ENCODE measurements at regions of chr5 and their contacts with region 1.

Region 1: DNA sequence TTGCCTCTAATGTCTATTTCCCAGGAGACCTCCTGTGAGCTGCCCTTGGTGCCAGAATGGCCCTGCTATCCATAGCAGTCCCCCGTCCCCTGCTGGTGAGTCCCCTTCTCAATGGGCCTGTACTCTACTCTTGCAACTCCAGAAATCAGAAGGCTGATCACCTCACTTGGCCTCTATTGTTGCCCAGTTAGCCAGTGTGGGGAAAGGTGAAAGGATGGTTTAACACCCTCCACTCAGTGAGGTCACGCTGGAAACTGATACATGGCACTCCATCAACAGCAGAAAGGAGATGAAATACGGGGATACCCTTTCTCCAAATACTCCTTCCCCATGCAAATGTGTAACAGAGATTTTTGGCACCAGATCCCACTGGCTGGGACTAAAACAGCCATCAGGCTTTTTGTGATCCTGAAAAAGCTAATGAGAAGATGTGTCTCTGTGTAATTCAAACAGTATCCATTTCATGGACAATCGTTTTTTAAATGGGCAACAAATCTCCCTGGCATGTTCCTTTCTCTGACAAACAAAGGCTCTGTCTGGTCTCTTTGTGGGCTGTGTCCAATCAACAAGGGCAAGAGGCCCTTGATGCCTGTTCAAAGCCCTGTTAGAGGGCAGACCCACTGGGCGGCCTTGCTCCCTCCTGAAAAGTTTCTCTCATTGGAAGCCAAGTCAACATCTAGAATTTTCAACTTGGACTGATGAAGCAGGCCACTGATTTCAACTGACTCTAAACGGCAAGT is 343.7 kb downstream of the SPOCK1 start:
- DNase-seq: peak in 2 of 10 donors; percentile 32 to 45
- H3K4me3 ChIP-seq: no peak overlapping the region
- H3K27ac ChIP-seq: peak overlapping the region in 25 of 59 donors; percentile 0 to 82 (median 33)
- H3K27me3 ChIP-seq: no peaks in the 10 kb centered on the region
- CTCF ChIP-seq: no peak

Region 2: GRCh38 chr5:137013219-137013618 is 142.2 kb before region 1 on chr5:
- intact Hi-C with region 1: no loop called
- DNase-seq: no peak
- H3K4me3 ChIP-seq: no peak overlapping the region
- H3K27ac ChIP-seq: no peak overlapping the region
- H3K27me3 ChIP-seq: no peaks in the 10 kb centered on the region
- CTCF ChIP-seq: no peak

Region 3: GRCh38 chr5:137201876-137202275 is 46.4 kb after region 1 on chr5:
- intact Hi-C with region 1: loop called in 1 of 2 experiments (anchors 5 kb)
- DNase-seq: no peak
- H3K4me3 ChIP-seq: no peak overlapping the region
- H3K27ac ChIP-seq: peak overlapping the region in 25 of 59 donors; percentile 1 to 72 (median 28)
- H3K27me3 ChIP-seq: no peaks in the 10 kb centered on the region
- CTCF ChIP-seq: peak in 1 of 56 donors; percentile 7

Measured in dorsolateral prefrontal cortex (tissue), 120 donors.